ENCODE measurements at regions of chr20 and their contacts with region 1.

Region 1: DNA sequence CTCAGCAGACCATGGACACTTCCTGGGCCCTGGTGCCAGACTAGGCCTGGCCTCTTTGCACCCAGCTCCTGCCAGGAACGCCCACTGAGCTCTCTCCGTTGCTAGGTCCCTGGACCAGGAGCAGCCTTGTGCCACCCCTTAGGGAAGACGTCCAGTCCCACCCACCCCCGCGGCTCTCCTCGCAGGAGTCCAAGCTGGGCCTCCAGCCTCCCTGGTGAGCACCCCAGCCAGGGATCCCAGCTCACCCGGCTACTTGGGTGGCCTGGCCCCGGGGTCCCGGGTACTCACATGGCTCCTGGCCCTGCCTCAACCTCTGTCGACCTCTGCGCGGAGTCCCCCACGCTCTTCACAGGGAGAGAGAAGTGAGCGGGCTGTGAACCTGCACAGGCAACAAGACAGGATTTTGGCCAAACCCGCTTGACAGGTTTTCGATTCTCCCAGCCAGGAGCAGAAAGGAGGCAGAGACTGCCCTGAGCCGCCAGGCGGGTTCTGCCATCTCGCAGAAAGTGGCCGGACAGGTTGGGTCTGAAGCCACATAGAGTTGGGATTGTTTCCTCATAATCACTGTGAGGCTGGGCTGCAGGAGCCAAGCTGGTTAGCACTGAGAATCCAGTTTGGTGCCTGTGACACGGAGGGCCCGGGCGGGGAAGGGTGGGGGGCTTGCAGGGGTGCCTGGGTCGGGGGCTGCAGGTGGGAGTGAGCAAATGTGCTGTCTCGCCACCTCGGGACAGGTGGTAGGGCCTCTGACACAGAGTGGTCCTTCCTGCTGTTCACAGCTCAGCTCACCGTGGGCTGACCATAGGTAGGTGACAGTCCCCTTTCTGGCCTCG is at the start of gene RBBP8NL:
- DNase-seq: peak; percentile 100
- H3K4me3 ChIP-seq: peak within 1 kb of the TSS; percentile 41
- H3K4me3 Mint-ChIP-seq: peak within 1 kb of the TSS; percentile 90
- H3K27ac Mint-ChIP-seq: peak within 1 kb of the TSS; percentile 88
- H3K4me1 ChIP-seq: peaks cover 92% of the 10 kb centered on the region
- H3K4me1 Mint-ChIP-seq: peaks cover 84% of the 10 kb centered on the region
- H3K27me3 ChIP-seq: no peaks in the 10 kb centered on the region
- H3K27me3 Mint-ChIP-seq: no peaks in the 10 kb centered on the region
- CTCF ChIP-seq: peak; percentile 42 to 79
- total RNA-seq, gene RBBP8NL: 39.2 and 40.5 TPM in 2 replicates

Region 2: GRCh38 chr20:62030834-62031434 is 396.5 kb before region 1 on chr20:
- CTCF ChIA-PET with region 1: no interaction called
- POLR2A ChIA-PET with region 1: no interaction called
- intact Hi-C with region 1: no loop called
- DNase-seq: no peak
- H3K4me3 ChIP-seq: no peak overlapping the region
- H3K4me3 Mint-ChIP-seq: no peak overlapping the region
- H3K27ac Mint-ChIP-seq: no peak overlapping the region
- H3K4me1 ChIP-seq: no peaks in the 10 kb centered on the region
- H3K4me1 Mint-ChIP-seq: peaks cover 15% of the 10 kb centered on the region
- H3K27me3 ChIP-seq: no peaks in the 10 kb centered on the region
- H3K27me3 Mint-ChIP-seq: no peaks in the 10 kb centered on the region
- CTCF ChIP-seq: no peak

Region 3: DNA sequence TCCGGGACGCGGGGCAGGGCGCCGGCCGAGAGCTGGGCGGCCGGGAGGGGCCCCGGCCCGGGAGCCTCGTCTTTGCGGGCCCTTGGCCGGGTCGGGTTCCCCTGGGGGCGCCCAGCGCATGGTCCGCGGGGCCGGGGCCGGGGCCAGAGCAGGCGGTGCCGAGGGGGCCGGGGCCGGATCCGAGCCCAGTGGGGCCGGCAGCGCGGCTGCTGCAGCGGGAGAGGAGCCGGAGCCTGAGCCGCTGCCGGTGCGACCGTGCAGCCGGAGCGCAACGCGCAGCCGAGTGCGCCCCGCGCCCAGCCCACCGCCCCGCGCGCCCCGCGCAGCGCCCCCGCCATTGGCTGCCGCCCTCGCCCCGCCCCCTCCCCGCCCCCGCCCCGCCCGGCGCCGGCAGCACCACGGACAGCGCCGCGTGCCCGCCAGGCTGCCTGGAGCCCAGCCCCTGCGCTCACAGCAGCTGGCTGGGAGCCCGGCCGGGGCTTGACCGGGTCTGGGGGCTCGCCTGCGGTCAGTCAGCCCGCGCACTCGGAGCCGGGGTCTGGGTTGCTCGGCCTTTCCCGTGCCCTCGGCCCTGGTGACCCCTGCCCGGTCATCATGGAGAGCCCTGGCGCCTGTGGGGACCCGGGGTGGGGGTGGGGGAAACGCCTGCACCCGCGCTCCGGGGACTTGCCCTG is 207.3 kb before region 1 on chr20 and contains the start of gene HRH3:
- CTCF ChIA-PET with region 1: no interaction called
- POLR2A ChIA-PET with region 1: no interaction called
- intact Hi-C with region 1: no loop called
- DNase-seq: peak in 1 of 2 experiments; percentile 91
- H3K4me3 ChIP-seq: peak within 1 kb of the TSS; percentile 29
- H3K4me3 Mint-ChIP-seq: peak within 1 kb of the TSS; percentile 65
- H3K27ac Mint-ChIP-seq: no peak within 1 kb of the TSS
- H3K4me1 ChIP-seq: peaks cover 26% of the 10 kb centered on the region
- H3K4me1 Mint-ChIP-seq: no peaks in the 10 kb centered on the region
- H3K27me3 ChIP-seq: peaks cover 37% of the 10 kb centered on the region
- H3K27me3 Mint-ChIP-seq: peaks cover 57% of the 10 kb centered on the region
- CTCF ChIP-seq: no peak
- total RNA-seq, gene HRH3: not detected in 2 replicates

Region 4: DNA sequence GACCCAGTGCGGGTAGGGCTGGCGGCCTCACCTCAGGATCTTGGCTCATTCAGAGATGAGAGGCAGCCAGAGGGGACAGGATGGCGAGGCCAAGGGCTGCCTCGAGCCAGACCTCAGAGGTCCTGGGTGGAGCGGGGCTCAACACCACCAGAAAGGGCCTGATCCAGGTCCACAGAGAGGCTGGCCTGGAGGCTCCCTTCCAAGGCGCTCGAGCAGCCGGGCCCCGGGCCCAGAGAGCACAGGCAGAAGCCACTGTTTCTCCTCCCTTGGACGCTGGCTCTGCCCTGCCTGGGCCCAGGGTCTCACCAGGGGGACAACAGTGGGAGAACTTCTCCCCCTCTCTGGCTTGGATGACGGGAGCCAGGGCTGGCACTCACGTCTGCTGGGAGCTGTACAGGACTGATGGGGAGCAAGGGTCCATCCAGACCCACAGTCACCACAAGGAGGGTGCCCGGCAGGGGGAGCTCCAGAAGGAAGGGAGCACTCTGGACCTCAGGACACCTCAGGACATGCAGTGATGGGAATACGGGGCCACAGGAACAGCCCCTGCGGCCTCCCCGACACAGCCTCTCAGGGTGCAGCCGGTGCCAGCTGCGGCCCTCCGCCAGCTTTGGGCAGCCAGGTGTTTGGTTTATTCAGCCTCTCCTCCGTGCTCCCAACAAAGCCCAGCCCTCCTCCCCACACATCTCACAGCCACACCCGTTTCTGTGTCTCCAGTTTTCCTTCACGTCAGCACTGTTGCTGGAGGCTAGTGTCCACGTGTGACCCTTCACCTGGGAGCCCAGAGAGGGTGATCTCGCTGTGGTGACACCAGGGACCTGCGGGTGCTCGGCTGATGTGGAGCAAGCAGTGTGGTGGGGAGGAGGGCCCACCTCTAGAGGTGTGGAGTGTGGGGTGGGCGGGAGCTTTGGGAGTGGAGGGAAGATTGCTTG is 31.8 kb before region 1 on chr20:
- CTCF ChIA-PET with region 1: no interaction called
- POLR2A ChIA-PET with region 1: no interaction called
- intact Hi-C with region 1: no loop called
- DNase-seq: no peak
- H3K4me3 ChIP-seq: no peak overlapping the region
- H3K4me3 Mint-ChIP-seq: no peak overlapping the region
- H3K27ac Mint-ChIP-seq: peak overlapping the region; percentile 11
- H3K4me1 ChIP-seq: no peaks in the 10 kb centered on the region
- H3K4me1 Mint-ChIP-seq: no peaks in the 10 kb centered on the region
- H3K27me3 ChIP-seq: no peaks in the 10 kb centered on the region
- H3K27me3 Mint-ChIP-seq: no peaks in the 10 kb centered on the region
- CTCF ChIP-seq: peak; percentile 21 to 27

Region 5: DNA sequence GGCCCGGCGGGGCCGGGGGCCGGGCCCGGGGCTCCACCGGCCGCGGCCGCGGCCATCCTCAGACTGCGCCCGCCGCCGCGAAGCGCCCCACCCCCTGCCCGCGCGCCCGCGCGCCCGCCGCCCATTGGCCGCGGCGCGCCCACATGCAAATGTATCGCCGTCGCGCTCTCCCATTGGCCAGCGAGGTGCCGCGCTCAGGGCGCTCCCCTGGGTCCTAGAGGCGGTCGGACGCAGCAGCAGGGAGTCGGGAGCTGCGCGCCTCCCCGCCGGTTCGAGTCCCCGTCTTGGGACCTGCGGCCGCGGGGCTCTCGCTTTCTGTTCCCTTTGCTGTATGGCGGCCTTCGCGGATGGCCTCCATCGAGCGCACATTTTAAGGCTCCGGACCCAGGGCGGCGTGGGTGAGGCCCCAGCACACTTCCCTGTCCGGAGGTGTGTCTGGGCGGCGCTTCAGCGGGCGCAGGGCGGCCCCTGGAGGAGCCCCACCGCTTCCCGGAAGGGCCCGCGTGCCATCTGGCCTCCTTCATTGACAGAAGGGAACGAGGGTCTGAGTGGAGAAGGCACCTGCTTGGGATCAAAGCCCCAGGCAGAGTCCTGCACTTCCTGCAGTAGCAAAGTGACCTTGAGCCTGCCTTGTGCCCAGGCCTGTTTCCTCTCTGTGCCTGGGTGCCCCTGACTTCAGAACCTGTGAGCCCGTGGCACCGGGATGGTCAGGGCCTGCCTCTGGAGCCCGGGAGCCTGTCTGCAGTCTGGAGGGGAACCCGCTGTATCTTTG is 20.0 kb before region 1 on chr20 and contains the start of gene CABLES2:
- CTCF ChIA-PET with region 1: interaction called, 11 read pairs
- POLR2A ChIA-PET with region 1: interaction called, 11 read pairs
- intact Hi-C with region 1: loop called (anchors 2 kb)
- DNase-seq: peak; percentile 99 to 100
- H3K4me3 ChIP-seq: peak within 1 kb of the TSS; percentile 95
- H3K4me3 Mint-ChIP-seq: peak within 1 kb of the TSS; percentile 78
- H3K27ac Mint-ChIP-seq: peak within 1 kb of the TSS; percentile 83
- H3K4me1 ChIP-seq: peaks cover 58% of the 10 kb centered on the region
- H3K4me1 Mint-ChIP-seq: peaks cover 41% of the 10 kb centered on the region
- H3K27me3 ChIP-seq: no peaks in the 10 kb centered on the region
- H3K27me3 Mint-ChIP-seq: no peaks in the 10 kb centered on the region
- CTCF ChIP-seq: peak in 1 of 2 experiments; percentile 54
- total RNA-seq, gene CABLES2: 30.7 and 36.4 TPM in 2 replicates

Region 6: DNA sequence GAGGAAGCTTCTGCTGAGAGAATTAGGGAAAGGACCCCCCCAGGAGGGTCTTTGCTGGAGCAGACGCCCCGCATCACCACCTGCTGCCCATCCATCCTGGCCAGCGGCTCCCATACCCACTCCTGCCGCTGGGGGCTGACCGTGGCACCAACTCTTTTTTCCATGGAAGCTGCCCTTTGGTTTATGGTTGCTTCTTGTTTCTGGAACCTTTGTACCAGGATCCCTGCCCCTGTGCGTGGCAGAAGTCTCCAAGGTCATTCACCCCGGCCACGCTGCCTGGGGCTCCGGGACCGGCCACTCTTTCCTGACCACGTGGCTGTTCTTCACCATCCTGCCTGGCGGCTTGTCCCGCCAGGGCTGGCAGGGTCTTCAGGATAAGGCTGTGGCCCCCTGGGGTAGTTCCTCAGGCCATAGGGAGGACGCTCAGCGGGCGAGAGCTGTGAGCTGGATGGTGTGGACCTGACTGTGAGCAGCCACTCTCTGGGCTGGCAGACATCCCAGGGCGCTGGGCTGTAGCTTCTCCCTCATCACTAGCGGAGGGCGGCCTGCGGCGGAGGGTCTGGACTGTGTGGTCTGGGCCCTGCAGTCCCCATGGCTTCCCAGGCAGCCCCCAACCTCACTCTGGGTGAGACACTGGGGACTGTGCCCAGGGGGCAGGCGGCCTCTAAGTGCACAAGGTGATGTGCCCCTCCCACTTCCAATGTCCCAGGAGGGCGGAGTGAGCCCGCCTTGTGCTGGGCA is 22.7 kb after region 1 on chr20:
- CTCF ChIA-PET with region 1: no interaction called
- POLR2A ChIA-PET with region 1: interaction called, 4 read pairs
- intact Hi-C with region 1: loop called (anchors 2 kb)
- DNase-seq: no peak
- H3K4me3 ChIP-seq: no peak overlapping the region
- H3K4me3 Mint-ChIP-seq: no peak overlapping the region
- H3K27ac Mint-ChIP-seq: peak overlapping the region; percentile 9
- H3K4me1 ChIP-seq: peaks cover 38% of the 10 kb centered on the region
- H3K4me1 Mint-ChIP-seq: peaks cover 23% of the 10 kb centered on the region
- H3K27me3 ChIP-seq: no peaks in the 10 kb centered on the region
- H3K27me3 Mint-ChIP-seq: no peaks in the 10 kb centered on the region
- CTCF ChIP-seq: peak in 1 of 2 experiments; percentile 14

Region 7: GRCh38 chr20:62477669-62478455 is 50.5 kb after region 1 on chr20:
- CTCF ChIA-PET with region 1: interaction called, 18 read pairs
- POLR2A ChIA-PET with region 1: no interaction called
- intact Hi-C with region 1: loop called (anchors 2 kb)
- DNase-seq: peak; percentile 81 to 86
- H3K4me3 ChIP-seq: no peak overlapping the region
- H3K4me3 Mint-ChIP-seq: no peak overlapping the region
- H3K27ac Mint-ChIP-seq: peak overlapping the region; percentile 72
- H3K4me1 ChIP-seq: peaks cover 57% of the 10 kb centered on the region
- H3K4me1 Mint-ChIP-seq: peaks cover 39% of the 10 kb centered on the region
- H3K27me3 ChIP-seq: no peaks in the 10 kb centered on the region
- H3K27me3 Mint-ChIP-seq: no peaks in the 10 kb centered on the region
- CTCF ChIP-seq: peak; percentile 88 to 96

Region 8: DNA sequence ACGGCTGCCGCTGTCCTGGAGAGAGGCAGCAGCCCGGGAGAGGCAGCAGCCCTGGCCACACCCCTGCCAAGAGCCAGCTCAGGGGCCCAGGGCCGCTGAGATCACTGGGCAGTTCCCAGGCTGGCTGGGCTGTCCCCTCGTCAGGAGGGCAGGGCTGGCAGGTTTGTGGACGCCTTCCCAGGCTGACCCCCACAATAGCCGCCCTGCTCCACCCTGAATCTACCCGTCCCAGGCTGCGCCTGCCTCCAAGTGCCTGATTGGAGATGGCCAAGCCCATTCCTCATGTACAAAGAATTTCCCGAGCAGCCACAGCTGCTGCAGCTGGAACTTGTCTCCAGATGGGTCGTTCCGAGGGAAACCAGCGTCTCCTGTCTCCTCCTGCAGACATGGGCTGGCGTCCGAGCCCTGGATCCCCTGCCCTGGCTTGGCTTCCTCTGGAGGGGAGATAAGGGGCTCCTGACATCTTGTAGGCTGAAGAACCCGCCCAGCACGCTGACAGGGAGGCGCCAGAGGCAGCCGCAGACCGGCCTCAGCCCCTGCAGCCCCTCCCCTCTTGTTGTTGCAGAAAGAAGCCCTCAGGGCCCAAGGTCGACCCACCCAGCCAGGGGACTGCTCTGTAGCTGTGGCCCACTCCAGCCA is 57.8 kb after region 1 on chr20:
- CTCF ChIA-PET with region 1: interaction called, 4 read pairs
- POLR2A ChIA-PET with region 1: no interaction called
- intact Hi-C with region 1: loop called (anchors 1 kb)
- DNase-seq: peak; percentile 72 to 89
- H3K4me3 ChIP-seq: no peak overlapping the region
- H3K4me3 Mint-ChIP-seq: peak overlapping the region; percentile 50
- H3K27ac Mint-ChIP-seq: peak overlapping the region; percentile 88
- H3K4me1 ChIP-seq: peaks cover 99% of the 10 kb centered on the region
- H3K4me1 Mint-ChIP-seq: peaks cover 70% of the 10 kb centered on the region
- H3K27me3 ChIP-seq: no peaks in the 10 kb centered on the region
- H3K27me3 Mint-ChIP-seq: no peaks in the 10 kb centered on the region
- CTCF ChIP-seq: peak in 1 of 2 experiments; percentile 0

Region 9: GRCh38 chr20:62500237-62500864 is 73.0 kb after region 1 on chr20:
- CTCF ChIA-PET with region 1: interaction called, 5 read pairs
- POLR2A ChIA-PET with region 1: no interaction called
- intact Hi-C with region 1: loop called (anchors 2 kb)
- DNase-seq: peak in 1 of 2 experiments; percentile 81
- H3K4me3 ChIP-seq: no peak overlapping the region
- H3K4me3 Mint-ChIP-seq: no peak overlapping the region
- H3K27ac Mint-ChIP-seq: no peak overlapping the region
- H3K4me1 ChIP-seq: peaks cover 17% of the 10 kb centered on the region
- H3K4me1 Mint-ChIP-seq: no peaks in the 10 kb centered on the region
- H3K27me3 ChIP-seq: no peaks in the 10 kb centered on the region
- H3K27me3 Mint-ChIP-seq: no peaks in the 10 kb centered on the region
- CTCF ChIP-seq: peak; percentile 81 to 89

Region 10: DNA sequence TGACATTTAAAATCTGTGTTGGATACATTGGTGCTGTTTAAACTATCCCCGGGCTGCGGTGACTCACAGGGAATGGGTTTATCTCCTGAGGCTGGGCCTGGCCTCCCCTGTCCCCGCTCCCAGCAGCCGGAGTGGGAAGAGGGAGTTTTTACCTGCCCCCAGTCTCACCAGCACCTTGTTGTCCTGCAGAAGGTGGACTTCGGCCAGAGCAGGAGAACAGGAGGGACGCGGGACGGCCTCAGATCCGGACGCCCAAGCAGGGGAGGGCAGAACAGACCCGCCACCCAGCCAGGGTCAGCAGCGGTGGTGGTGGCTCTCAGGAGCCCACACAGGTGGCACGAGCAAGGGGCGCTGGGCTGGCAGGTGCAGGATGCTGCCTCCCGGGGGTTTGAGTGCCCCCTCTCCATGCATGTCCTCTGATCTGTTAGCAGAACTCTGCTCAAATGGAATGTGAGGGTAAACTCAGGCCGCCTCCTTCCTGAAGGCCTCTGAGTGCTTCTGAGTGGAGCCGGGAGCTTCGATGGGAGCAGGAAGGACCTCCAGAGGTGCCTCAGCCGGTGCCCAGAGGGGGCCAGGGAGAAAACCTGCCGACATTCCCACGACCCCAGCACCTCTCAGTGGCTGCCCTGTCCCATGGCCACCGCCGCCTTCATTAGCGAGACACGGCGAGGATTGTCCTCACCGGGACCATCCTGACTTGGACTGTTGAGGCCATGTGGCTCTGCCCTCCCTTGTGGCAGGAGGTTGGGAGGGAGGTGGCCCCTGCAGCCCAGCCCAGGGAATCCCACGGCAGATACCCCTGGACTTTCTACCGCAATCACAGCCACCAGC is 325.5 kb after region 1 on chr20:
- CTCF ChIA-PET with region 1: no interaction called
- POLR2A ChIA-PET with region 1: no interaction called
- intact Hi-C with region 1: no loop called
- DNase-seq: peak; percentile 48 to 75
- H3K4me3 ChIP-seq: no peak overlapping the region
- H3K4me3 Mint-ChIP-seq: no peak overlapping the region
- H3K27ac Mint-ChIP-seq: no peak overlapping the region
- H3K4me1 ChIP-seq: peaks cover 11% of the 10 kb centered on the region
- H3K4me1 Mint-ChIP-seq: no peaks in the 10 kb centered on the region
- H3K27me3 ChIP-seq: no peaks in the 10 kb centered on the region
- H3K27me3 Mint-ChIP-seq: peaks cover 6% of the 10 kb centered on the region
- CTCF ChIP-seq: no peak